Right ventricle myocardium superior (tissue), 1 donor: ENCODE measurements at regions of chr10 and their contacts with region 1.

Region 1: DNA sequence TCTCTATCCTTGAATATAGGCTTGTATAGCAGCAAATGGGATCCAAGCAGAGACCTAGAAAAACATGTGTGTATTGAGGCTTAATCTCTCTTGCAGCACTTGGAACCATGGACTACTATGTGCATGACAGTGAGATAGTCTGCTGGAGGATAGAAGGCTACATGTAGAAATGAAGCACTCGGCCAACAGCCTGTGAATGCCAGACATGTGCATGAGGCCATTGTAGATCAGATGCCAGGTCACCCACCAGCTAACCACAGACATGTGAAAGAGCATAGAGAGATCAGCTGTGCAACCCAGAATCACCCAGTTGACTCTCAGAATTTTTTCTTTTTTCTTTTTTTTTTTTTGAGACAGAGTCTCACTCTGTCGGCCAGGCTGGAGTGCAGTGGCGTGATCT is 90.9 kb downstream of the NT5C2 start:
- DNase-seq: no peak
- ATAC-seq: no peak

Region 2: DNA sequence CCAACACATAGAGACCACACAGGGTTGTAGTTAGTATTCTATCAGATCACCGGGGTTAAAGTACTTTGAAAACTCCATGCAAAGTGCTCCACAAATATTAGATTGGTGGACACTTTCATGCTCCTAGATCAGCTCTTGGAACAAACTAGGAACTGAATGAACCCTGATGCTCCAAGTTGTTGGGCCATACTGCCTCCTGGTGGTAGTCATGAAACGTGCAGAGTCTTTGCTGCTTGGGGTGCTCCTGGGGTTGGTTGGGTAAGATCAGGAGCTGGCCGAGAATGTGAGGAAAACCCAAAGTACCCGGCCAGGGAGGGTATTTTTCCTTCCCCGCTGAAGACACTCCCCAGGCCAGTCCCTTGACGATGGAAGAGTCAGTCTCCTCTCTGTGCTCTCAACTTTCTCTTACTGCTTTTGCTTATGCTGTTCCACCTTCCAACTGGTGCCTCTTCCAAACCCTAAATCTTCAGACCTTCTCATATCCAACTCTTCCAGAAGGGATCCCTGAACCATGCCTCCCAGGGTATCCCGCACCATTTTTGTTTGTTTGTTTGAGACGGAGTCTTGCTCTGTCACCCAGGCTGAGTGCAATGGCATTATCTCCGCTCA is 142.6 kb after region 1 on chr10:
- intact Hi-C with region 1: loop called (anchors 10 kb)
- DNase-seq: peak; percentile 71
- ATAC-seq: peak; percentile 94